Sciatic nerve (tissue), 2 donors: ENCODE measurements at regions of chr9 and their contacts with region 1.

Region 1: GRCh38 chr9:94199776-94200175 is 59.3 kb upstream of the ZNF169 start:
- DNase-seq: no peak
- ATAC-seq: no peak

Region 2: GRCh38 chr9:93095205-93096130 is 1104.3 kb before region 1 on chr9:
- intact Hi-C with region 1: no loop called
- DNase-seq: peak; percentile 100
- ATAC-seq: peak; percentile 93

Region 3: GRCh38 chr9:95634536-95634935 is 1434.8 kb after region 1 on chr9:
- intact Hi-C with region 1: loop called (anchors 10 kb)
- DNase-seq: no peak
- ATAC-seq: no peak